ENCODE measurements at regions of chr15 and their contacts with region 1.

Region 1: GRCh38 chr15:98996169-98996568 is 11.4 kb downstream of the PGPEP1L start:
- DNase-seq: no peak
- H3K4me3 ChIP-seq: no peak overlapping the region
- H3K27ac ChIP-seq: no peak overlapping the region
- H3K4me1 ChIP-seq: no peaks in the 10 kb centered on the region; a peak in 1 of 7 replicates
- H3K27me3 ChIP-seq: no peaks in the 10 kb centered on the region
- CTCF ChIP-seq: no peak
- EP300 ChIP-seq: no peak
- POLR2A ChIP-seq: no peak
- RAD21 ChIP-seq: no peak

Region 2: DNA sequence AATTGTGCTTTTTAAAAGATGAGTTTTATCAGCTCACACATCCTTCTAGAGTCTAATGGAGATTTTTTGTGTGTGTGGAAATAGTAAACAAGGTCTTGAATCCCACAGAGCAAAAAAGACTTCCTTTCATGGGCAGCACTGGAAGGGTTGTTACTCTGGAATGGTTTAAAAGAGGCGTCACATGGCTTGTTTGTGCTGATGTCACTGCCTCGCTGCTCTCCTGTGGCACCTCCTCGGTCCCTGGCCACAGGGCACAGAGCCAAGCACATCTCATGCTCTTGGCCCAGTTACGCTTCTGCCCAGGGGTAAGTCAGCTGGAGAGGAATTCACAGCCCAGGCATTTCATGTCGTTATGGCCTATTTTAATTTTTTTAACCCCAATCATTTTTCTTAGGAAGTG is 41.8 kb before region 1 on chr15:
- CTCF ChIA-PET with region 1: no interaction called
- POLR2A ChIA-PET with region 1: no interaction called
- DNase-seq: no peak
- H3K4me3 ChIP-seq: no peak overlapping the region
- H3K27ac ChIP-seq: no peak overlapping the region
- H3K4me1 ChIP-seq: no peaks in the 10 kb centered on the region
- H3K27me3 ChIP-seq: no peaks in the 10 kb centered on the region
- CTCF ChIP-seq: no peak
- EP300 ChIP-seq: no peak
- POLR2A ChIP-seq: no peak
- RAD21 ChIP-seq: no peak

Region 3: GRCh38 chr15:98983333-98983732 is 12.8 kb before region 1 on chr15:
- CTCF ChIA-PET with region 1: interaction called, 11 read pairs
- POLR2A ChIA-PET with region 1: interaction called, 3 read pairs
- DNase-seq: peak in 1 of 2 experiments; percentile 14
- H3K4me3 ChIP-seq: no peak overlapping the region
- H3K27ac ChIP-seq: no peak overlapping the region
- H3K4me1 ChIP-seq: no peaks in the 10 kb centered on the region
- H3K27me3 ChIP-seq: no peaks in the 10 kb centered on the region
- CTCF ChIP-seq: no peak
- EP300 ChIP-seq: no peak
- POLR2A ChIP-seq: no peak
- RAD21 ChIP-seq: no peak

Region 4: DNA sequence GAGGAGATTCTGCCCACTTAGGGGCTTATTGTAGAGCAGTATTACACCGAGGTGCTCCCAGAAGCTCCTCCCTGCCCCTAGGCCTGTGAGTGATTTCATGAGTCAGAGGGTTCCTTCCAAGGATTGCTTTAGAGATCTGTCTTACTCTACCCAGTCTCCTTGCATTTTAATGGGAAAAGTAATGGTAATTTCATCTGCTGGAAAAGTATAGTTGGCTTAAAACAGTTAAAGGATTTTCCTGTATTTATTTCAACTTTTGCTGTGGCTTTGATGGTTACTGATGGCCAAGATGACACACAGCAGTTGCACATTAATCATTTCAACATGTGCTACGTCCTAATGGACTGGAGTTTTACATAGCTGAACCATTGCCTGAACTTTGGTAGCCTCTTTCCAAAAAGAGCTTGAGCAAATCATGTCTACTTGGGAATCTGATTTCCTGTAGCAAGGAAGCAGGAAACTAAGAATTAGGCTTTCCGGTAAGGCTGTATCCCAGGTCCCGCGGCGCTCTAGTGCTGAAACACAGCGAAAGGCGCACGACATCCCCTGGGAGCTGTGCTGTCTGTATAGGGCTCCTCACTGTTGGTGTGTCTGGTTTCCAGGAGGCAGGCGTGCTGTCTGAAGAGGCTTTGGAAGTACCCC is 20.6 kb after region 1 on chr15:
- CTCF ChIA-PET with region 1: no interaction called
- POLR2A ChIA-PET with region 1: no interaction called
- DNase-seq: peak in 1 of 2 experiments; percentile 41
- H3K4me3 ChIP-seq: no peak overlapping the region; a peak in 1 of 8 replicates
- H3K27ac ChIP-seq: no peak overlapping the region
- H3K4me1 ChIP-seq: peaks cover 0 to 4% (median 2%) of the 10 kb centered on the region in 4 experiments; a peak in 3 of 7 replicates
- H3K27me3 ChIP-seq: peaks cover 0 to 2% (median 0%) of the 10 kb centered on the region in 4 experiments; a peak in 1 of 7 replicates
- CTCF ChIP-seq: no peak
- EP300 ChIP-seq: no peak
- POLR2A ChIP-seq: no peak
- RAD21 ChIP-seq: no peak

Region 5: GRCh38 chr15:99452774-99453636 is 456.8 kb after region 1 on chr15:
- CTCF ChIA-PET with region 1: no interaction called
- POLR2A ChIA-PET with region 1: no interaction called
- DNase-seq: peak in 1 of 2 experiments; percentile 40
- H3K4me3 ChIP-seq: no peak overlapping the region
- H3K27ac ChIP-seq: no peak overlapping the region
- H3K4me1 ChIP-seq: no peaks in the 10 kb centered on the region; a peak in 1 of 7 replicates
- H3K27me3 ChIP-seq: no peaks in the 10 kb centered on the region
- CTCF ChIP-seq: no peak
- EP300 ChIP-seq: no peak
- POLR2A ChIP-seq: no peak
- RAD21 ChIP-seq: no peak

Measured in H1 (cell line).